ENCODE measurements at regions of chr11 and their contacts with region 1.

Region 1: GRCh38 chr11:45089676-45090499 is 56.6 kb upstream of the PRDM11 start:
- DNase-seq: no peak
- ATAC-seq: peak in 2 of 4 donors; percentile 16 to 17
- H3K4me3 ChIP-seq: no peak overlapping the region
- H3K27ac ChIP-seq: peak overlapping the region in 11 of 12 donors; percentile 61 to 88 (median 75)
- H3K4me1 ChIP-seq: peaks cover 0 to 63% (median 44%) of the 10 kb centered on the region in 12 donors
- H3K27me3 ChIP-seq: no peaks in the 10 kb centered on the region
- CTCF ChIP-seq: peak in 4 of 12 donors; percentile 11 to 29 (median 14)
- POLR2A ChIP-seq: no peak

Region 2: DNA sequence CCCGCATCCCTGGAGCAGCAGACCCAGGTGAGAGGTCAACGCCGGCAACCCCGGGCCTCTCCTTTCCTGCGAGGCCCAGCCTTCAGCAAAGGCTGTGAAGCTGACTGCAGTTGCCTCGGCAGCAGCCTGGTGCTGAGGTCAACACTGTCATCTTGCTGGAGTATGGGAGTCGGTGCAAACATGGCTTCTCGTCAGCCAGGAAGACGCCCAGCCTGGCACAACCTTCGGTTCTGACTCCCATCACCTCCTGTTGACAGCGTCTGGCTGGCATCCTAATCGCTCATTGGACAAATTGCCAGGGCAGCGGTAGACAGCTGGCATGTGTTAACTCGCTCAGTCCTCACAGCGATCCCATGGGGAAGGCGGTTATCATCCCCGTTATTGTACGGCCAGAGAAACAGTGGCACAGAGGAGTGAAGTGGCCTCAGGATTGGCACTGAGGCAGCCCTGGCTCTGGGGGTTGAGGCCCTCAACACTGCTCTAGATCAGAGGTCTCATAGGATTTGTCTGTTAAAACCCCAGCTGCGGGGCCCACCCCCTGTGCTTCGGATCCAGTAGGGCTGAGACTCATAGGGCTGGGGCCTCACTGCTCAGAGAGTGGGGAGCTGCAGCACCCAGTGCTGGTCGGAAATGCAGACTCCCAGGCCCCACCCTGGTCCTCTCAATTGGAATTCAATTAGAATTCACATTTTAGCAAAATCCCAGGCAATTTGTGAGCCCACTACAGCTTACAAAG is 99.9 kb before region 1 on chr11:
- intact Hi-C with region 1: loop called in 1 of 10 experiments (anchors 5 kb)
- DNase-seq: peak; percentile 83 to 93 (median 86)
- ATAC-seq: peak; percentile 90 to 94 (median 93)
- H3K4me3 ChIP-seq: no peak overlapping the region
- H3K27ac ChIP-seq: peak overlapping the region in 11 of 12 donors; percentile 7 to 78 (median 60)
- H3K4me1 ChIP-seq: peaks cover 0 to 36% (median 16%) of the 10 kb centered on the region in 12 donors
- H3K27me3 ChIP-seq: no peaks in the 10 kb centered on the region
- CTCF ChIP-seq: no peak
- POLR2A ChIP-seq: no peak

Region 3: DNA sequence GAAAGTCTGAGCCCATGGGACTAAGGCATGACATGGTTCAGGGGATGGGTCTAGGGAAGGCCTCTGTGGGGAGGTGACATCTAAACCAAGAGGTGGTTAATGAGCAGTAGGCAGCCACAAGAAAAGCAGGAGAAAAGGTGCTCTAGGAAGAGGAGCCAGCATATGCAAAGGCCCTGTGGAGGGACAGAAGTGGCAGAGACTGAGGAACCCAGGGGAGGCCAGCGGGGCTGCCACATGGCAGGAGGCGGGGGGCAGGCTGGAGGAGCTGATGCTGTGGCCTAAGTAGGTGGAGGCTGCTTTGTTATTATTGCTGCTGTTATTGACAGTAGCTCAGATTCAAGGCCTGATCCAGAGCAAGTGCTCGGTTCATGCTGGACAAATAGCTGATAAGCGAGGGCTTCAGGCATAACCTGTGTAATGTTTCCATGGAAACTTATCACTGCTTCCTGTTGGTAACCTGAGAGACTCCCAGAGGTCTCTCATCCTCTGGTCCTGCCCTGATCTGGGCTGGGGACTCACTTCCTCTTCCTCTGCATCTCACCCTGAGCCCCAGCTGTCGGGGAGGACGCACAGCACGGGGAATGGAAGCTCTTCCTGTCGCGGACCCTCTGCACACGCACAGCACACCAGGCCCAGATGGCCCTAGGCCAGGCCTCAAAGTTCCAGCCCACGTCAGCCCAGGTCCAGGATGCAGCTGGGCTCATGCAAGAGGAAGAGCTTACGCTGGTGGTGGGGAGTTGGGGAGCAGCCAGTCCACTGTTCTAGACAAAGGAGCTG is 64.0 kb before region 1 on chr11:
- intact Hi-C with region 1: loop called in 1 of 10 experiments (anchors 5 kb)
- DNase-seq: peak; percentile 66 to 88 (median 87)
- ATAC-seq: peak; percentile 64 to 93 (median 70)
- H3K4me3 ChIP-seq: no peak overlapping the region
- H3K27ac ChIP-seq: peak overlapping the region in 10 of 12 donors; percentile 16 to 85 (median 68)
- H3K4me1 ChIP-seq: peaks cover 10 to 66% (median 38%) of the 10 kb centered on the region in 12 donors
- H3K27me3 ChIP-seq: no peaks in the 10 kb centered on the region
- CTCF ChIP-seq: no peak
- POLR2A ChIP-seq: no peak

Region 4: GRCh38 chr11:45052361-45052760 is 37.5 kb before region 1 on chr11:
- intact Hi-C with region 1: loop called in 1 of 10 experiments (anchors 5 kb)
- DNase-seq: no peak
- ATAC-seq: no peak
- H3K4me3 ChIP-seq: no peak overlapping the region
- H3K27ac ChIP-seq: no peak overlapping the region
- H3K4me1 ChIP-seq: peaks cover 8 to 28% (median 24%) of the 10 kb centered on the region in 12 donors
- H3K27me3 ChIP-seq: no peaks in the 10 kb centered on the region
- CTCF ChIP-seq: no peak
- POLR2A ChIP-seq: no peak

Region 5: GRCh38 chr11:45073685-45074141 is 16.2 kb before region 1 on chr11:
- intact Hi-C with region 1: no loop called
- DNase-seq: no peak
- ATAC-seq: peak in 3 of 4 donors; percentile 19 to 53 (median 42)
- H3K4me3 ChIP-seq: no peak overlapping the region
- H3K27ac ChIP-seq: peak overlapping the region in 1 of 12 donors; percentile 34
- H3K4me1 ChIP-seq: peaks cover 0 to 21% (median 4%) of the 10 kb centered on the region in 12 donors
- H3K27me3 ChIP-seq: no peaks in the 10 kb centered on the region
- CTCF ChIP-seq: no peak
- POLR2A ChIP-seq: no peak